Heart right ventricle (tissue), 16 donors: ENCODE measurements at regions of chr3 and their contacts with region 1.

Region 1: GRCh38 chr3:23805633-23806533 is at the start of gene UBE2E1:
- DNase-seq: peak; percentile 79 to 80
- ATAC-seq: peak; percentile 67 to 84 (median 80)
- H3K4me3 ChIP-seq: peak within 1 kb of the TSS; percentile 85 to 99 (median 92)
- H3K27ac ChIP-seq: peak within 1 kb of the TSS; percentile 60 to 95 (median 90)
- H3K4me1 ChIP-seq: peaks cover 5 to 35% (median 31%) of the 10 kb centered on the region in 9 donors
- H3K27me3 ChIP-seq: no peaks in the 10 kb centered on the region
- CTCF ChIP-seq: no peak
- total RNA-seq, gene UBE2E1: 59.7 to 88.8 (median 65.9) TPM

Region 2: GRCh38 chr3:23183734-23184133 is 622.1 kb before region 1 on chr3:
- intact Hi-C with region 1: loop called in 2 of 10 experiments (anchors 10 kb)
- DNase-seq: peak in 1 of 2 donors; percentile 36
- ATAC-seq: peak in 6 of 8 donors; percentile 63 to 77 (median 75)
- H3K4me3 ChIP-seq: no peak overlapping the region
- H3K27ac ChIP-seq: no peak overlapping the region
- H3K4me1 ChIP-seq: peaks cover 0 to 1% (median 0%) of the 10 kb centered on the region in 9 donors
- H3K27me3 ChIP-seq: peaks cover 0 to 11% (median 0%) of the 10 kb centered on the region in 7 donors
- CTCF ChIP-seq: peak in 7 of 9 donors; percentile 31 to 60 (median 50)

Region 3: GRCh38 chr3:23202921-23203707 is 602.8 kb before region 1 on chr3 and contains the start of gene UBE2E2:
- intact Hi-C with region 1: loop called in 4 of 10 experiments (anchors 10 kb)
- DNase-seq: peak; percentile 59 to 78
- ATAC-seq: peak; percentile 75 to 94 (median 87)
- H3K4me3 ChIP-seq: peak within 1 kb of the TSS; percentile 72 to 98 (median 92)
- H3K27ac ChIP-seq: peak within 1 kb of the TSS; percentile 66 to 93 (median 88)
- H3K4me1 ChIP-seq: peaks cover 0 to 49% (median 20%) of the 10 kb centered on the region in 9 donors
- H3K27me3 ChIP-seq: peaks cover 0 to 7% (median 0%) of the 10 kb centered on the region in 7 donors
- CTCF ChIP-seq: no peak
- total RNA-seq, gene UBE2E2: 35.1 to 63.8 (median 54.6) TPM

Region 4: GRCh38 chr3:23739536-23739935 is 66.3 kb before region 1 on chr3:
- intact Hi-C with region 1: loop called in 1 of 10 experiments (anchors 10 kb)
- DNase-seq: no peak
- ATAC-seq: peak in 7 of 8 donors; percentile 7 to 75 (median 52)
- H3K4me3 ChIP-seq: no peak overlapping the region
- H3K27ac ChIP-seq: peak overlapping the region in 1 of 10 donors; percentile 56
- H3K4me1 ChIP-seq: peaks cover 0 to 44% (median 31%) of the 10 kb centered on the region in 9 donors
- H3K27me3 ChIP-seq: no peaks in the 10 kb centered on the region
- CTCF ChIP-seq: no peak

Region 5: GRCh38 chr3:23865595-23866450 is 59.9 kb after region 1 on chr3:
- intact Hi-C with region 1: loop called in 2 of 10 experiments (anchors 10 kb)
- DNase-seq: peak in 1 of 2 donors; percentile 19
- ATAC-seq: peak; percentile 30 to 80 (median 48)
- H3K4me3 ChIP-seq: no peak overlapping the region
- H3K27ac ChIP-seq: peak overlapping the region in 9 of 10 donors; percentile 7 to 78 (median 48)
- H3K4me1 ChIP-seq: peaks cover 10 to 75% (median 51%) of the 10 kb centered on the region in 9 donors
- H3K27me3 ChIP-seq: no peaks in the 10 kb centered on the region
- CTCF ChIP-seq: no peak

Region 6: DNA sequence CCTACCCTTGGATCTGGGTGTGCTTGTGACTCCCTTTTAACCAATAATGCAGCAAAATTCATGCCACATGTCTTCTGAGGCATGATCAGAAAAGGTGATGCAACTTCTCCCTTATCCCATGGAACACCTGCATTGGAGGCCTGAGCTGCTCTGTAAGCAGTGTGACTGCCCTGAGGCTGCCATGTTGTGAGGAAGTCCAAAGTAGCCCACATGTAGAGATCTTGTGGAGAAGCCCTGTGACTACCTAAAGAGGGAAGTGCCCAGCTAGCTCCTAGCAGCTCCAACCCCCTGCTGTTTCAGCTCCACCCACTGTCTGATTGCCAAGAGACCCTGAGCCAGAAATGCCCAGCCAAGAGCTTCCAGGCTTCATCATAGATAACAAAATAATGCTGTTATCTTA is 132.8 kb after region 1 on chr3:
- intact Hi-C with region 1: no loop called
- DNase-seq: no peak
- ATAC-seq: no peak
- H3K4me3 ChIP-seq: no peak overlapping the region
- H3K27ac ChIP-seq: no peak overlapping the region
- H3K4me1 ChIP-seq: no peaks in the 10 kb centered on the region
- H3K27me3 ChIP-seq: no peaks in the 10 kb centered on the region
- CTCF ChIP-seq: no peak